Activated naive CD4-positive, alpha-beta T cell treated with anti-CD3 and anti-CD28 coated beads for 36 hours (primary cell): ENCODE measurements at regions of chr11 and their contacts with region 1.

Region 1: GRCh38 chr11:8070417-8071115 is 10.4 kb upstream of the TUB start:
- DNase-seq: no peak
- H3K4me3 Mint-ChIP-seq: no peak overlapping the region
- H3K27ac Mint-ChIP-seq: no peak overlapping the region
- H3K4me1 Mint-ChIP-seq: peaks cover 8% of the 10 kb centered on the region
- H3K27me3 Mint-ChIP-seq: peaks cover 26% of the 10 kb centered on the region

Region 2: GRCh38 chr11:7571640-7572000 is 498.9 kb before region 1 on chr11:
- CTCF ChIA-PET with region 1: no interaction called
- intact Hi-C with region 1: no loop called
- DNase-seq: peak; percentile 62
- H3K4me3 Mint-ChIP-seq: no peak overlapping the region
- H3K27ac Mint-ChIP-seq: no peak overlapping the region
- H3K4me1 Mint-ChIP-seq: peaks cover 19% of the 10 kb centered on the region
- H3K27me3 Mint-ChIP-seq: no peaks in the 10 kb centered on the region

Region 3: DNA sequence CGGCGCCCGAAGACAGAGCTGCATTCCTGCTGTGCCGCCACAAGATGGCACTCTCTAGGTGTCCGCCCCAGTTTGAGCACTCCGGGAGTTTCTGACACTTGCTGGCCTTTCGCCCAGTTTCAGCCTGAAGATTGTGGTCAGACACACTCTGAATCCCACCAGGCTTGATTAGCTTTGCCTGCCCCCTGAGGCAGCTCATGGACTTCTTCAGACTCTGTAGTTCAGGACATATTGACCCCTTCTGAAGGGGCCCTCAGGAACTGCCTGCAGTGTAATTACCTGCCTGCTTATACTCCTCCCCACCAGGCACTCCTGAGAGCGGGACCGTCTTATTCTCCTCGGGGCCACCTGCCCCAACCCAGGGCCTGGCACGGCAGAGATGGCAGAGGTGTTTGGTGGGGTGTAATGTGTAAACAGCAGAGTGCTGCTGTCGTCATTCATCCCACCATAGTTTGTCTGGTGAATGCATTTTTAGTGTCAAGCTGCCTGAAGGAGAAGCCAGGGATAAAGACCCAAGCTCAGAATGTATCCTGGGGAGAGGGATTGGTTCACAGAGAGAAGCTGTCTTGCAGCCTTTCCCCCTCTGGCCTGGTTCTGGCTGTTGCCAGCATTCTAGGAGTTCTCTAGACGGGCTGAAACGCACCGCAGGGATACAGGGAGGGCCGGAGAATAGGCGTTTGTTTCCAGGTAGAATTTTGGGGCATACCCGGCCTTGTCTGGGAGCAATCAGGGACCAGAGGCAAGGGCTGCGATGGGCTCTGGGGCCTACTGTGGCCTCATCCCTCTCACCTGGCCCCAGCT is 37.1 kb before region 1 on chr11:
- CTCF ChIA-PET with region 1: interaction called, 10 read pairs
- intact Hi-C with region 1: loop called (anchors 1 kb)
- DNase-seq: peak; percentile 62
- H3K4me3 Mint-ChIP-seq: no peak overlapping the region
- H3K27ac Mint-ChIP-seq: no peak overlapping the region
- H3K4me1 Mint-ChIP-seq: peaks cover 4% of the 10 kb centered on the region
- H3K27me3 Mint-ChIP-seq: peaks cover 30% of the 10 kb centered on the region

Region 4: DNA sequence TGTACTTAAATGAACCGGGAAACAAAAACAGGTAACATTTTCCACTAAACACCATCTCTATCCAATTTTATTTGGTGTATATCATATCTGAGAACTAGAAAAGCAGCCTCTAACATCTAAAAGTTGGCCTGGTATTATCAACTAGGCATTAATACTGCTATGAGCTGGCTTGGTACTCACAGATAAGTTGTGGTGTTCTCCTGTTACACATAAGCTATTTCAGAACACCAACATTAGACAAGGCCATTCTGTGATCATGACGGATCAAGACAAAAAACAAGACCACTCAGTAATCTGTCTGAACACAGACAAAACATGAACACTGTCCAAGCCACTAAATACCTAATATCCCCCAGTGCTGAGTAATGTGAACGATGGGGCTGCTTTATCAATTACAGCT is 86.3 kb after region 1 on chr11:
- CTCF ChIA-PET with region 1: no interaction called
- intact Hi-C with region 1: no loop called
- DNase-seq: no peak
- H3K4me3 Mint-ChIP-seq: no peak overlapping the region
- H3K27ac Mint-ChIP-seq: no peak overlapping the region
- H3K4me1 Mint-ChIP-seq: peaks cover 11% of the 10 kb centered on the region
- H3K27me3 Mint-ChIP-seq: no peaks in the 10 kb centered on the region